ENCODE measurements at regions of chr14 and their contacts with region 1.

Region 1: DNA sequence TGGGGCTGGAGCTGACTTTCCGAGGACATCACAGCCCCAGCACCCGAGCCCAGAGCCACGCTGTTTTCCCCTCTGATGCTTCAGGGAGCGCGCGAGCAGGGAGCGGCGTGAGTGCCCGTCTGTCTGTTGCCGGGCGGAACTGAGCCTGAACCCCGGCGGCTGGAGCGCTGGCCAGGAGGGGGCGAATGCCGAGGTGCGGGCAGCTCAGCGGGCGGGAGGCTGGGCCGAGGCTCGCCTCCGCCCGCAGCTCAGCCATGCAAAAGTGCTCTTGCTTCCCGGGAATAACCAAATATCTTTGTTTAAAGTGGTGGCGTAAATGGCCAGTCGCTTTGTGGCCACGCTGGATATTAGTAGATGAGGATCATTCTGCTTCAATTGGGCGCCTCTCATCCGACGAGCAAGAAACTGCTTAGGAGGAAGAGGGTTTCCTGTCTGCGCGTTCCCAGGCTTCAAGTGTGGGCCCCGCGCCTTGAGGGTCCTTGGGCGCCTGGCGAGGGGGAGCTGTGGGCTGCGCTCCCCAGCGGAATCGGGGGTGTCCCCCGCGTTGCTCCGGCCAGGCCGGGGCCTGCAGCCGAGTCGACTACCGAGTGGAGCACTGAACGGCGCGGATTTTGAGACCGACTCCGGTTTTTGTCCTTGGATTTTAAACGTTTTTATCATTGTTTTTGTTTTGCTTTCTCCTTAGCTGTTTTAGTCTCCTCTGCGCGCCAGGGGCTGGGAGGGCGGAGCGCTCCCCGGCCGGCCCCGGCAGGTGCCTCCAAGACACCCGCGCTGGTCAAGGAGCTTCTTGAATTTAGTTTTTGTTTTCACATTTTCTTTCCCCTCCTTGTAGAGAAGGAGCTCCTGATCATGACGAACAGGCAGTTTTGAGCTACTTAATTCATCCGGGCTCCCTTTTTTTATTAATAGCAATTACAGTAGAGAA is 831 bp upstream of the NKX2-1 start:
- DNase-seq: peak; percentile 73
- ATAC-seq: peak; percentile 7
- H3K4me3 Mint-ChIP-seq: peak overlapping the region; percentile 59
- H3K27ac Mint-ChIP-seq: no peak overlapping the region
- H3K4me1 Mint-ChIP-seq: peaks cover 34% of the 10 kb centered on the region
- H3K27me3 Mint-ChIP-seq: peaks cover 98% of the 10 kb centered on the region
- CTCF ChIP-seq: no peak

Region 2: GRCh38 chr14:36105401-36105800 is 415.5 kb before region 1 on chr14:
- CTCF ChIA-PET with region 1: interaction called, 41 read pairs
- POLR2A ChIA-PET with region 1: no interaction called
- DNase-seq: peak; percentile 21
- ATAC-seq: peak; percentile 92
- H3K4me3 Mint-ChIP-seq: no peak overlapping the region
- H3K27ac Mint-ChIP-seq: no peak overlapping the region
- H3K4me1 Mint-ChIP-seq: no peaks in the 10 kb centered on the region
- H3K27me3 Mint-ChIP-seq: no peaks in the 10 kb centered on the region
- CTCF ChIP-seq: no peak

Region 3: DNA sequence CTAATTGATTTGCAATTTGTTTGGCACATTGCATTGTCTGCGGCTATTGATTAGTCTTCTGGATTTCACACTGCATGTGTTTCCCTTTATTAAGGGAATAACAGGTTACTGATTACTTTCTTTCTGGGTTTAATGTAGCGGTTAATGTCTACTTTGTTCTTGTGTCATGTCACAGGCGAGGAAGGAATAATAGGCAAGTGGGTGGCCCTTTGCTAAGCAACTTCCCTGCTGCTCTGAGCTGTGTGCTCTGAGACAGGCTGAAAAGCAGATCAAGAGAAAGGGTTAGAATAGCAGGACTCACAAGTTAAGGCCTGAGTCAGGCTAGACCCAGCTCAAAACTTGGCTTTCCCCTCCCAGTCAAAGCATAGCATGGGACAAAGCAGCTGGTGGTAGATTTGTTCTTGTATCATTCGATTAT is 78.0 kb before region 1 on chr14:
- CTCF ChIA-PET with region 1: interaction called, 69 read pairs
- POLR2A ChIA-PET with region 1: no interaction called
- DNase-seq: no peak
- ATAC-seq: peak; percentile 95
- H3K4me3 Mint-ChIP-seq: peak overlapping the region; percentile 39
- H3K27ac Mint-ChIP-seq: no peak overlapping the region
- H3K4me1 Mint-ChIP-seq: peaks cover 48% of the 10 kb centered on the region
- H3K27me3 Mint-ChIP-seq: peaks cover 95% of the 10 kb centered on the region
- CTCF ChIP-seq: no peak

Region 4: DNA sequence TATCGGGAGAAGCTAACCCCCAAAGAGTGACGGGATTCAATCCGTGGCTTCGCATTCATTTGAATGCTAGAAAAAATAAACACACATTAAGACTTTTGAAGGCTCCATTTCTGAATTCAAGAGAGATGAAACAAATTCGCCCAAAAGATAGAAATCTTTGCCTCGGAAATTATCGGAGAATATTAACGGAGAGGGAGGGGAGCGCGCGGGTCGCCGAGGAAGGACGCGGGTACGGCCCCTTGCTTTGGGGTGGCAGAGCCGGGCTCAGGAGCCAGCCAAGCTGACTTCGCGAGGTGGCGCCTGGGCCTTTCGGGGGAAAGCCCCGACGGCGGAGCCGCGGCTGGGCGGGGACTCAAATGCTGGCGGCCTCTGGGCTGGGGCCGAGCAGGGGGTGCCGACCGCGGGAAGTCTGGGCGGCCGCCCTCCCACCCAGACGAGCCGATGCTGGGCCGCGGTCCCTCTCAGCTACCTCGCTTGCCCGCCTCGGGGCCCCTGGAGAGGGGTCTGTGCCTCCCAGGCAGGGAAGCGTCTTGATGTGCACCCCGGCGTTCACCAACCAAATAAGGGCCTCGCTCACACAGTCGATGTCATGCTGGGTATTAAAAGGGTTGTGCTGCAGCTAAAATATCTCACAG is 15.6 kb before region 1 on chr14:
- CTCF ChIA-PET with region 1: interaction called, 113 read pairs
- POLR2A ChIA-PET with region 1: interaction called, 7 read pairs
- DNase-seq: peak; percentile 60
- ATAC-seq: peak; percentile 30
- H3K4me3 Mint-ChIP-seq: peak overlapping the region; percentile 65
- H3K27ac Mint-ChIP-seq: no peak overlapping the region
- H3K4me1 Mint-ChIP-seq: peaks cover 56% of the 10 kb centered on the region
- H3K27me3 Mint-ChIP-seq: peaks cover 100% of the 10 kb centered on the region
- CTCF ChIP-seq: no peak

Region 5: DNA sequence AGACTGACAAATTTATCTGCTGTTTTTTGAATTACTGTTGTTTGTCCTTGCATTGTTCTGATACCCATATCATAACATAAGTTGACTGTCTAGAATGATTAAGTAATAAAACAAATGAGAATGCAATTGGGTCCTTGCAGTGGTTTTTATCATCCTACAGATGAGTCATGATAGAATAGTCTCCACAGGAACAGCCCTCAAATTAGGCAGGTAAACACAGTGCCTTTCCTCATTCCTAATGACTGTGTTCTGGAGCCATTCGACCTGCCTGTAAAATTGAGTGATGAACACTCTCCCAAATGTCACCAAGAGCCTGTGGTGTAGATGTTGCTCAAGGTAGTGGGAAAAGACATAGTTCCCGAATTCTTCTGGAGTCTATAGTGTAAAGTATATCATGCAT is 49.2 kb after region 1 on chr14:
- CTCF ChIA-PET with region 1: no interaction called
- POLR2A ChIA-PET with region 1: no interaction called
- DNase-seq: no peak
- ATAC-seq: no peak
- H3K4me3 Mint-ChIP-seq: no peak overlapping the region
- H3K27ac Mint-ChIP-seq: no peak overlapping the region
- H3K4me1 Mint-ChIP-seq: no peaks in the 10 kb centered on the region
- H3K27me3 Mint-ChIP-seq: peaks cover 3% of the 10 kb centered on the region
- CTCF ChIP-seq: no peak

Region 6: DNA sequence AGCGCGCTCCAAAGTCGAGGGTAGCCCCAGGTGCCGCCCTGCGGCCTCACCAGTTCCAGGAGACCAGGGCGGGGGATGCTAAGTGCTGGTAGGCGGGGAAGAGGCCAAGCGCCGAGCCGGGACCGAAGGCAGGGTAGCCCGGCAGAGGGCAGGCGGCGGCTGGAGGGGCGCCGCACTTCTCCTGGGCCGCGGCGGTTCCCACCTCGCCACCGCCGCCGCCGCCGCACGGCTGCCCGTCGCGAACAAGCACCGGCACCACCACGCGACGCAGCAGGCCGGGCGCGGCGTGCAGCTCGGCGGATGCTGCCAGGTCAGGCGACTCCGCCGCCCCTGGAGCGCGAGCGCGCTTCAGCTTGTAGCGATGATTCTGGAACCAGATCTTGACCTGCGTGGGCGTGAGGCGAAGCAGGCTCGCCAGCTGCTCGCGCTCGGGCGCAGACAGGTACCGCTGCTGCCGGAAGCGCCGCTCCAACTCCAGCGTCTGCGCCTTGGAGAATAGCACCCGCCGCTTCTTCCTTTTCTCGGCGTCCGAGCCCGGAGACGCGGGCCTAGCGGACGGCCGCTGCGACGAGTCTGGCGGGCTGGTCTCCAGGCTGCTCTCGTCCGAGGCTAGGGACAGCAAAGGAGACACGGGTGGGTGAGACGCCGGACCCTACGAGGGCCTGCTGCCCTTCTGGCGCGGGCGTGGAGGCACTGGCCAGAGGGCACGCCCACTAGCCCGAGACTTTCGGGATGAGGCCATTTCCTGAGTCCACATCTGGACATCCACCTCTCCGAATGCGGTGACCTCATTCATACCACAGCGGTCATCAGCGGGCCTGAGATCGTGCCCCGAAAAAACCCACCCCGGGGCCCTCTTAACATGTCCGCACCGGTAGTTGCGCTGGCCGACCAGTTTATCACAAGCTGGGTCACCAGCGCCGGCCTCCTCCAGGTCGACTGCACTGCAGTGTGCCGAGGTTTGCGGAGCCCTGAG is 60.3 kb after region 1 on chr14:
- CTCF ChIA-PET with region 1: interaction called, 145 read pairs
- POLR2A ChIA-PET with region 1: interaction called, 3 read pairs
- DNase-seq: peak; percentile 61
- ATAC-seq: peak; percentile 52
- H3K4me3 Mint-ChIP-seq: peak overlapping the region; percentile 60
- H3K27ac Mint-ChIP-seq: no peak overlapping the region
- H3K4me1 Mint-ChIP-seq: peaks cover 29% of the 10 kb centered on the region
- H3K27me3 Mint-ChIP-seq: no peaks in the 10 kb centered on the region; the same call in 1 of the 2 replicates
- CTCF ChIP-seq: no peak

Region 7: GRCh38 chr14:36604757-36605505 is 84.1 kb after region 1 on chr14:
- CTCF ChIA-PET with region 1: interaction called, 77 read pairs
- POLR2A ChIA-PET with region 1: no interaction called
- DNase-seq: peak; percentile 60
- ATAC-seq: peak; percentile 83
- H3K4me3 Mint-ChIP-seq: peak overlapping the region; percentile 57
- H3K27ac Mint-ChIP-seq: no peak overlapping the region
- H3K4me1 Mint-ChIP-seq: peaks cover 12% of the 10 kb centered on the region
- H3K27me3 Mint-ChIP-seq: peaks cover 39% of the 10 kb centered on the region
- CTCF ChIP-seq: peak; percentile 48

Region 8: DNA sequence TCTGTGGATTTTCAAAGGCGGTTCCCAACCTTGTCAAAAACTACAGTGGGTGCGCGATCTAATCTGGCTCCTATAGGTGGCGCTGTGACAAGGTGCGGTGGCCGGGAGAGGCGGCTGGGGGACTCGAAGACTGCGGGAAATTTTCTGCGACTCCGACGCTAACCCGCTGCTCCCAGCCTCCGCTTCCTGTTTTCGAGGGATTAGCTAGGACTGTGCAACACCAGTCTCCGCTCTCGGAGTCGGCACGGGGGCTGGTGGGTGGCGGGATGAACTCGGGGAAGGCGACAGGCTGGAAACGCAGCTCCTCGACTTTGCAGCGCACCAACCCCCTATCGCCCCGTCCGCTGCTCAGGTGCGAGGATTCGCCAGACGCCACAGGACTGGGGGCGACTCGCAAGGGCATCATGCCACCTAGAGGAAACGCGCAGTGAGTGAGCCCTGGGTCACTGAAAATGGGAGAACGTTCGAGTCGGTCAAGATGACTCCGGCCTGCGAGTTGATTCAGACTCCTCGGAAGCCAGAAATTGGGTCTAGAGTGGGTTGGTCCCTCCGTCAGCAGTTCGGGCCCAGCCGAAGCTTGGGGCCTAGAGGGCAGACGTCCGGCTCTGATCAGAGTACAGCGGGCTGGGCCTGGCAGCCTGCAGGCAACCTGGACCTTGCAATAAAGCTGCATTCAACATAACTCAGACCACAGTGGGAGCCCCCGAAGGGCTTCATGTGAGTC is 135.3 kb after region 1 on chr14:
- CTCF ChIA-PET with region 1: interaction called, 44 read pairs
- POLR2A ChIA-PET with region 1: no interaction called
- DNase-seq: peak; percentile 84
- ATAC-seq: peak; percentile 43
- H3K4me3 Mint-ChIP-seq: peak overlapping the region; percentile 55
- H3K27ac Mint-ChIP-seq: no peak overlapping the region
- H3K4me1 Mint-ChIP-seq: peaks cover 48% of the 10 kb centered on the region
- H3K27me3 Mint-ChIP-seq: peaks cover 100% of the 10 kb centered on the region
- CTCF ChIP-seq: peak; percentile 88

Measured in WTC11 (cell line).